IMR-90 (cell line): ENCODE measurements at regions of chr4 and their contacts with region 1.

Region 1: GRCh38 chr4:156779774-156780173 is 191.8 kb downstream of the PDGFC start:
- DNase-seq: peak; percentile 95
- ATAC-seq: peak; percentile 72
- H3K4me3 ChIP-seq: no peak overlapping the region
- H3K27ac ChIP-seq: peak overlapping the region; percentile 30; the same call in 1 of the 2 replicates
- H3K4me1 ChIP-seq: peaks cover 14% of the 10 kb centered on the region
- H3K27me3 ChIP-seq: no peaks in the 10 kb centered on the region
- CTCF ChIP-seq: no peak
- POLR2A ChIP-seq: no peak
- RAD21 ChIP-seq: no peak

Region 2: DNA sequence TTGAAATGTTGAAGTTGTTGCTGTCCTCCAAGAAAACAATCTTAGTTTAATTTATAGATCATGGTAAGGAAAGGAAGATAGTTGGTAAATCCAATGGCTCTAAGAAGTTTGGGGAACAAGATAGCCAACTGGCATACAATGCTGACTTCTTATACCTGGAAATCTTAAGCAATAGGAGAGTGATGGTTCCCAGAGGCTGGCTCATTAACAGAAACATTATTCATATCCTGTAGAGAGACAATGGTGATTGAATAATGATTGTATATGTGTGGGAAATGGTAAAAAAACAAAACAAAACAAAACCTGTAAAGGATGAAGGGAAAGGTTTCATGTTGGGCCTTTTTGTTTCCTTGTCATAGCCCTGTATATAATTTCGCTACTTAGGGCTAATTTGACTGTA is 651.2 kb before region 1 on chr4:
- CTCF ChIA-PET with region 1: no interaction called
- POLR2A ChIA-PET with region 1: no interaction called
- dilution Hi-C with region 1: no loop called
- in situ Hi-C with region 1: no loop called
- intact Hi-C with region 1: no loop called
- DNase-seq: no peak
- ATAC-seq: no peak
- H3K4me3 ChIP-seq: no peak overlapping the region
- H3K27ac ChIP-seq: no peak overlapping the region
- H3K4me1 ChIP-seq: no peaks in the 10 kb centered on the region
- H3K27me3 ChIP-seq: peaks cover 2% of the 10 kb centered on the region; the same call in 1 of the 2 replicates
- CTCF ChIP-seq: no peak
- POLR2A ChIP-seq: no peak
- RAD21 ChIP-seq: no peak

Region 3: DNA sequence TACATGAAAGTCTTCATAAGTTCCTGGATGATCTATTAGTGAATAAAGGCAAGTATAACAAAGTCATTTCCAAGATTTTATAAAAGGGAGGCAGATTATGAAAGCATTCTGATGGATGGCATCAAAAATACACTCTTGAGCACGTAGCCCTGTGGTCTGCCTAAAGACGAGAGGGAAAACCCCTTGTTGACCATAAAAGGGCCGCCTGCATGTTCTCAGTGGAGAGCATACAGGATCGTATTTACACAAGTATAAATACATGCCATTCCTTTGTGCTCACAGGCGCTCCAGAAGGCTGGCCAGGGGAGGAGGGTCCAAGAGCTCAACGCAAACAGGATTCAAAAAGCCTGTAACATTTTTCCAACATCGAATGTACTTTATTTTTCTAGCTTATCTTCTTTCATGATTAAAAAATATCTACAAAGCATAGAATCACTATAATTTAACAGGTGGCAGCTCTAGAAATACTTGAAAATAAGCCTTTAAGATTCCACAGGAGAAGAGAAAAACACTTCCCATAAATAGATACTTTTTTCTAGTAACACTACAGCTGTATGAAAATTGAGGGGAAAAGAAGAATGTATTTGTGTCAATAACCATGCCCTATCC is 162.3 kb after region 1 on chr4:
- CTCF ChIA-PET with region 1: interaction called, 3 read pairs
- POLR2A ChIA-PET with region 1: no interaction called
- dilution Hi-C with region 1: no loop called
- in situ Hi-C with region 1: no loop called
- intact Hi-C with region 1: loop called (anchors 5 kb)
- DNase-seq: peak; percentile 97
- ATAC-seq: peak; percentile 93
- H3K4me3 ChIP-seq: no peak overlapping the region
- H3K27ac ChIP-seq: peak overlapping the region; percentile 62; the same call in 1 of the 2 replicates
- H3K4me1 ChIP-seq: peaks cover 17% of the 10 kb centered on the region
- H3K27me3 ChIP-seq: no peaks in the 10 kb centered on the region
- CTCF ChIP-seq: no peak
- POLR2A ChIP-seq: no peak
- RAD21 ChIP-seq: peak; percentile 22; the same call in 1 of the 2 replicates